ENCODE measurements at regions of chr7 and their contacts with region 1.

Region 1: DNA sequence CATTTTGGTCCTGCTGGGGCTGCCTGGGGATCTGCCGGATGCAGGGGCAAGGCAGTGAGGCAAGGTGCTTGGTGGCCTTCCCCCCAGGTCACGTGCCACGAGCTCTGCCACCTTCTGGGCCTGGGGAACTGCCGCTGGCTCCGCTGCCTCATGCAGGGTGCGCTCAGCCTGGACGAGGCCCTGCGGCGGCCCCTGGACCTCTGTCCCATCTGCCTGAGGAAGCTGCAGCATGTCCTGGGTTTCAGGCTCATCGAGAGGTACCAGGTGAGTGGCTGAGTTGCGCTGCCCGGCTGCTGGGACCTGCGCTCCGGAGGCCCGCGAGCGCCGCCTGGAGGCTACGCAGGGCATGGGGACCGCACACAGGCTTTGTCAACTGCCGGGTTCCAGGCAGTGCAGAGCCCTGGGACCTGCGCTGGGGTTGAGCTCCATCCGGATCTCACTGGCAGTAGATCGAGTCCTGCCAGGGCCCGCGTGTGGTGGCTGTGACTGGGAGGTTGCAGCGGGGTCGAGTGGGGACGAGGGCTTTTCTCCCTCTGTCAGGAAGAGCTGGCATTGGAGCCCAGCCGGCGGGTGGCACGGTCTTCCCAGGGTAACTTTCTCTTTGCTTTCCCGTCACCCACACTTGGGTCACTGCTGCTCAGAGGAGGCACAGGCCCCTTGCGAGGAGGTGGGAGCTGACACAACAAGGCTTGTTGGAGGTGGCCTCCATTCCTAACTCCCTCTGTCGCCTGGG is 21.7 kb downstream of the AMZ1 start:
- DNase-seq: peak; percentile 67 to 84 (median 77)
- H3K4me3 ChIP-seq: peak overlapping the region; percentile 66
- H3K4me3 Mint-ChIP-seq: peak overlapping the region; percentile 76 to 85 (median 78)
- H3K27ac ChIP-seq: peak overlapping the region; percentile 43
- H3K27ac Mint-ChIP-seq: peak overlapping the region in 6 of 8 donors; percentile 68 to 90 (median 88)
- H3K4me1 ChIP-seq: peaks cover 33% of the 10 kb centered on the region
- H3K4me1 Mint-ChIP-seq: peaks cover 29 to 47% (median 36%) of the 10 kb centered on the region in 3 donors
- H3K27me3 ChIP-seq: no peaks in the 10 kb centered on the region
- H3K27me3 Mint-ChIP-seq: peaks cover 0 to 4% of the 10 kb centered on the region in 2 donors

Region 2: DNA sequence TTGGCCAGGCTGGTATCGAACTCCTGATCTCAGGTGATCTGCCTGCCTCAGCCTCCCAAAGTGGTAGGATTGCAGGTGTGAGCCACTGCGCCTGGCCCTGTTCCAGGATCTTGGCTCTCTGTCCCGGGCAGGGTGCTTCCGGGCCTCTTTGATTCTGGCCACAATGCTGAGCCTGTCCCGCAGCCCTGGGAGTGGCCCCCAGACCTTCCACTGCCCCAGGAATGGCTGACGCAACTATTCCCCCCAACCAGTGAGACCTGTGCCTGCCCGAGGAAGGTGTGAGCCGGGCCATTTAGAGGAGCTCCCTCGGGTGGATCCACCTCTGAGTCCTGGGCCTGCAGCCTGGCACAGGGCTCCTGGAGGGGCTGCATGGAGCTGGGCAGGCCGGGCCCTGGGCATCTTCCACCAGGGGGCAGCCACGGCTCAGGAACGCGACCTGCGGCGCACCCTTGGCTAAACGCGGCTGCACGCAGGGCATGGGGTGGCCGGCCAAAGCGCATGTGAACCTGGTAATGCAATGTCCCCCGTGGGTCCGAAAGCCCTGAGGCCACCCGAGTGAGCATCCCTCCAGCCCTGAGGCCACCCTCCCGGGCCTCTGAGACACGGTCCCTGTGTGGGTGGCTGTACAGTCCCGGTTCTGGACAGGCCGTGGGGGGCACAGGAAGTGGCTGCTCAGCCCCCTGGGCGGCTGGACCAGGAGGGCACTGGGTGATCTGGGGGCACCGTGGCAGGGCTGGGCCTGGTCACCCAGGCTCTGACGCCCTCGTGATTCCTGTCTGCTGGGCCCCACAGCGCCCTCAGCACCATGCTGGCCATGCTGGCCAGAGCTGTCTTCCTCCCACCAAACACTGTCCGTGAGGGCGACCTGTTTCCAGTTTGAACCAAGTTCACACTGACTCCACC is 258.3 kb before region 1 on chr7:
- CTCF ChIA-PET with region 1: interaction called, 35 read pairs
- POLR2A ChIA-PET with region 1: no interaction called
- DNase-seq: peak; percentile 59 to 78 (median 67)
- H3K4me3 ChIP-seq: peak overlapping the region; percentile 59
- H3K4me3 Mint-ChIP-seq: peak overlapping the region in 6 of 7 donors; percentile 58 to 84 (median 68)
- H3K27ac ChIP-seq: no peak overlapping the region
- H3K27ac Mint-ChIP-seq: peak overlapping the region in 5 of 8 donors; percentile 22 to 82 (median 53)
- H3K4me1 ChIP-seq: peaks cover 9% of the 10 kb centered on the region
- H3K4me1 Mint-ChIP-seq: peaks cover 4 to 17% (median 10%) of the 10 kb centered on the region in 3 donors
- H3K27me3 ChIP-seq: no peaks in the 10 kb centered on the region
- H3K27me3 Mint-ChIP-seq: no peaks in the 10 kb centered on the region

Region 3: GRCh38 chr7:2651847-2652735 is 57.6 kb before region 1 on chr7:
- CTCF ChIA-PET with region 1: interaction called, 10 read pairs
- POLR2A ChIA-PET with region 1: no interaction called
- DNase-seq: no peak
- H3K4me3 ChIP-seq: no peak overlapping the region
- H3K4me3 Mint-ChIP-seq: no peak overlapping the region
- H3K27ac ChIP-seq: no peak overlapping the region
- H3K27ac Mint-ChIP-seq: no peak overlapping the region
- H3K4me1 ChIP-seq: no peaks in the 10 kb centered on the region
- H3K4me1 Mint-ChIP-seq: no peaks in the 10 kb centered on the region
- H3K27me3 ChIP-seq: no peaks in the 10 kb centered on the region
- H3K27me3 Mint-ChIP-seq: peaks cover 0 to 2% of the 10 kb centered on the region in 2 donors

Region 4: DNA sequence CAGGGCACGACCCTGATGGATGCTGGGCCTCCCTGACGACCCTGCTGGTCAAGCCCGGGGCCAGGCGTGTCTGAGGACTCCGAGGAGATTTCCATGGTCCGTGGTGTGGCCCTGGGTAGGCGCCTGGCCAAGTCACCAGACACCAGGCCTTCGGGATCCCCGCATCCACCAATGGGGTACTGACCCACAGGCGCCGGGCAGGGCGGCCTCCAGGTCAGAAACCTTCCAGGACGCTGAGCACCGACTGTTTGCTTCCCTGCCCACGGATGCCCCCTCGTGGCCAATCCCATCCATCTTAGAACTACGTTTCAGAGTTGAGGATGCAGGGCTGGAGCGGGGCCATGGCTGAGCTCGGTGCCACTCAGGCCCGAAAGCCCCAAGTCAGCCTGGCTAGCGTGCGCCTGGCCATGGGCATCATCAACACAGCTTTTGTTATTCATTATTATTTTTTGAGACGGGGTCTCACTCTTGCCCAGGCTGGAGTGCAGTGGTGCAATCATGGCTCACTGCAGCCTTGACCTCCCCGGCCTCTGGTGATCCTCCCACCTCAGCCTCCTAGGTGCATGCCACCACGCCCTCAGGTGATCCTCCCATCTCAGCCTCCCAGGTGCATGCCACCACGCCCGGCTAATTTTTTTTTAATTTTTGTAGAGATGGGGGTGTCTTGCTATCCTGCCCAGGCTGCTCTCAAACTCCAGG is 28.8 kb before region 1 on chr7:
- CTCF ChIA-PET with region 1: interaction called, 27 read pairs
- POLR2A ChIA-PET with region 1: no interaction called
- DNase-seq: peak; percentile 21 to 63 (median 26)
- H3K4me3 ChIP-seq: no peak overlapping the region
- H3K4me3 Mint-ChIP-seq: no peak overlapping the region
- H3K27ac ChIP-seq: no peak overlapping the region
- H3K27ac Mint-ChIP-seq: no peak overlapping the region
- H3K4me1 ChIP-seq: no peaks in the 10 kb centered on the region
- H3K4me1 Mint-ChIP-seq: no peaks in the 10 kb centered on the region
- H3K27me3 ChIP-seq: peaks cover 2% of the 10 kb centered on the region
- H3K27me3 Mint-ChIP-seq: peaks cover 5 to 10% of the 10 kb centered on the region in 2 donors

Region 5: DNA sequence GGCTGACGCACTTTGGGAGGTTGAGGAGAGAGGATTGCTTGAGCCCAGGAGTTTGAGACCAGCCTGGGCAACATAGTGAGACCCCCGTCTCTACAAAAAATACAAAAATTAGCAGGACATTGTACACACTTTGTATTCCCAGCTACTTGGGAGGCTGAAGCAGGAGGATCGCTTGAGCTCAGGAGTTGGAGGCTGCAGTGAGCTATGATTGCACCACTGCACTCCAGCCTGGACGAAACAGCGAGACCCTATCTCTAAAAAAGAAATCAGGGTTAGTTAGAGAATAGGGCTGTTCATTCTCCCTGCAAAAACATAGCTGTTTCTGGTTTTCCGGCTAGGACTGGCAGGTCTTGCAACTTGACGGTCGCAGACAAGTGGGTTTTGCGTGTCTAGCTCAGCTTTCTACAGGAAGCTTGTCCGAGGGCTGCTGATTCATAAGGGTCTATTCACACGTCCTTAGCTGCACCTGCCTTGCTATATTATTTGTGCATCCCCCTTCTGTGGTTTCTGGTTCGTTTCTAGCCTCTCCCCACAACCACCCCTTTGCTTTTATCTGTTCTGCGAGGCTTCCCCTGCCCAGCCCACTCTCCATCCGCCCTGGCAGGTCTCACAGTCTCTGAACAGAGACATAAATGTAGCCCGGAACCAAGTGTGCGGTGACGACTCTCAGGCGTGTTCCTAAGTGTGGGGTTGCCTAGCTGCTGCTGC is 11.0 kb before region 1 on chr7:
- CTCF ChIA-PET with region 1: interaction called, 100 read pairs
- POLR2A ChIA-PET with region 1: interaction called, 22 read pairs
- DNase-seq: peak; percentile 38 to 90 (median 70)
- H3K4me3 ChIP-seq: no peak overlapping the region
- H3K4me3 Mint-ChIP-seq: peak overlapping the region; percentile 11 to 81 (median 66)
- H3K27ac ChIP-seq: no peak overlapping the region
- H3K27ac Mint-ChIP-seq: peak overlapping the region; percentile 8 to 89 (median 73)
- H3K4me1 ChIP-seq: peaks cover 22% of the 10 kb centered on the region
- H3K4me1 Mint-ChIP-seq: peaks cover 20 to 31% (median 22%) of the 10 kb centered on the region in 3 donors
- H3K27me3 ChIP-seq: no peaks in the 10 kb centered on the region
- H3K27me3 Mint-ChIP-seq: no peaks in the 10 kb centered on the region